CD8-positive, alpha-beta memory T cell (primary cell): ENCODE measurements at regions of chr7 and their contacts with region 1.

Region 1: DNA sequence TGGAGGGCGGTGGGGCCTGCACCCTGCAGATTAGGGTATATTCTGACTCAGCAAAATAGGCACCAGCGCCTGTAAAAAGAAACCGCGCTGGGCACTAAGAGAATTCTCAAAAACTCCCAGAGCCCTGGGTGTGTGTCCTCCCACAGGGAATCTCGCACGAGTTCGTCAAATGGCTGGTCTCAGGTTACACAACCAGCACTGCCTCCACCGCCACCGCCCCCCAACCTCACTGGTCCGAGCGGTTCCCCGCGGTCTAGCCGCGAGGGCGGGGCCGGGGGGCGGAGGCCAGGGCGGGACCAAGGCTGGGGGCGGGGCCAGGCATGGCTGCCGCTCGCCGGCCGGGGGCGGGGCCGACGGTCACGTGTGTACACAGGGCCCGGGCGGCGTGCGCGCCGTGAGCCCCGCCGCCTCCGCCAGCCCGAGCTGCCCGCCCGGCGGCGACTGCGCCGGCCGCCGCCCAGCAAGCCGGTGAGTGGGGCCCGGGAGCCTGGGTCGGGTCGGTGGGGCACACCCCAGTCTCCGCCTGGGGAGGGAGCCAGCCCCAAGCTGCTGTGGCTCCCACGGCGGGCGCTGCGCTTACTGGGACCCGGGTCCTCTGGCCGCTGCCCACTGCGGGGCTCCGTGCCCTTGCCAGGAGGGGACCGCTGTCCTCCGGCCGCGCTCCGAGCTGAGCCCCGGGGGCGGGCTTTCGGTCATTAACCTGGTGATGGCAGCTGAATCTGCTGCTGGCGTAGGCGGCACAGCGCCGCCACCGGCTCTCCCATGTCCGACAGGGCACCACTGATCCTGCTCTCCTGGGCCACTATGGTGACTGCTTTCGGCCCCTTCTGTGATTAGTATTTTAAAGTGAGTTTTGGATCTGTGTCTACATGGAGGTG is at the start of gene GPR146:
- DNase-seq: peak; percentile 81 to 92 (median 89)
- H3K4me3 ChIP-seq: peak within 1 kb of the TSS; percentile 68
- H3K4me3 Mint-ChIP-seq: peak within 1 kb of the TSS; percentile 83 to 92 (median 87)
- H3K27ac ChIP-seq: peak within 1 kb of the TSS; percentile 76
- H3K27ac Mint-ChIP-seq: peak within 1 kb of the TSS; percentile 67 to 90 (median 86)
- H3K4me1 ChIP-seq: peaks cover 65% of the 10 kb centered on the region
- H3K4me1 Mint-ChIP-seq: peaks cover 57 to 72% (median 59%) of the 10 kb centered on the region in 3 donors
- H3K27me3 ChIP-seq: no peaks in the 10 kb centered on the region
- H3K27me3 Mint-ChIP-seq: no peaks in the 10 kb centered on the region
- total RNA-seq, gene GPR146: 0.55 to 0.70 TPM

Region 2: DNA sequence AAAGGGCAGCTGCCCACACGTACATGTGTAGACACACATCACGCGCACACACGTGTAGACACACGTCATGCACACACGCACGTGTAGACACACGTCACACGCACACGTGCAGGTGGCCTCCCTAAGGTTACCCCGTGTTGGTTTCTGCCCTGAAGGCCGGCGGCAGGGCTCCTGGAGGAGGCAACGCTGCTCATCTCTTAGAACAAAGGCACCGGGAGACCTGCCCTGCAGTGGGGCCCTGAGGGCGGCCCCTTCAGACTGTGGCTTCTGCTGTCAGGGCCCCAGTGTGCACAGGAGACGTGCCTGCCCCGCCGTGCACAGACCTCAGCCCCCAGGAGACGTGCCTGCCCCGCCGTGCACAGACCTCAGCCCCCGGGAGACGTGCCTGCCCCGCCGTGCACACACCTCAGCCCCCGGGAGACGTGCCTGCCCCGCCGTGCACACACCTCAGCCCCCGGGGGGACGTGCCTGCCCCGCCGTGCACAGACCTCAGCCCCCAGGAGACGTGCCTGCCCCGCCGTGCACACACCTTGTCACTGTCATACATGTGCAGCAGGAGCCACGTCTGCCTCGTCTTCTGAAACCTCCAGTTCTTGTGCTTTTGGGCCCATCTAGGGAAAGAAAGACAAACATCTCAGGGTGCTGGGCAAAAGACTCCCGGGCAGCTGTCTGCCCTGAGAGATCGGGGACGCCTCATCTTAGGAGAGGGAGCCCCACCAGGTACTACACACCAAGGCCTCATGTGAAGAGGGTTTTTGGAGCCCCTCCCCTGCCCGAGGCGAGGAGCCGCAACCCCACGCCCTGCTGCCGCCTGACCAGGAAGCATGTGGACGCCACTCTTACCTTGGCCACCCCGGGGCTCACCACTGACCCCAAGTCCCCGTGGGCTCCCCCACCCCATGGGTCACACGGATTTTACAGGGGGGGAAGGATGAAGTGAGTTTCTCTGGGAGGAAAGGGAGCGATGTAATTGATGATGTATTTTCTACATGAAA is 44.2 kb before region 1 on chr7:
- CTCF ChIA-PET with region 1: no interaction called
- POLR2A ChIA-PET with region 1: no interaction called
- DNase-seq: no peak
- H3K4me3 ChIP-seq: no peak overlapping the region
- H3K4me3 Mint-ChIP-seq: no peak overlapping the region
- H3K27ac ChIP-seq: no peak overlapping the region
- H3K27ac Mint-ChIP-seq: peak overlapping the region in 1 of 8 donors; percentile 29
- H3K4me1 ChIP-seq: no peaks in the 10 kb centered on the region
- H3K4me1 Mint-ChIP-seq: no peaks in the 10 kb centered on the region
- H3K27me3 ChIP-seq: no peaks in the 10 kb centered on the region
- H3K27me3 Mint-ChIP-seq: no peaks in the 10 kb centered on the region

Region 3: GRCh38 chr7:1028031-1028770 is 16.2 kb before region 1 on chr7:
- CTCF ChIA-PET with region 1: interaction called, 15 read pairs
- POLR2A ChIA-PET with region 1: interaction called, 6 read pairs
- DNase-seq: peak; percentile 67 to 89 (median 82)
- H3K4me3 ChIP-seq: peak overlapping the region; percentile 69
- H3K4me3 Mint-ChIP-seq: peak overlapping the region; percentile 53 to 89 (median 80)
- H3K27ac ChIP-seq: peak overlapping the region; percentile 87
- H3K27ac Mint-ChIP-seq: peak overlapping the region in 6 of 8 donors; percentile 63 to 98 (median 86)
- H3K4me1 ChIP-seq: peaks cover 23% of the 10 kb centered on the region
- H3K4me1 Mint-ChIP-seq: peaks cover 20 to 57% (median 34%) of the 10 kb centered on the region in 3 donors
- H3K27me3 ChIP-seq: no peaks in the 10 kb centered on the region
- H3K27me3 Mint-ChIP-seq: peaks cover 0 to 2% of the 10 kb centered on the region in 2 donors